ENCODE measurements at regions of chr1 and their contacts with region 1.

Region 1: DNA sequence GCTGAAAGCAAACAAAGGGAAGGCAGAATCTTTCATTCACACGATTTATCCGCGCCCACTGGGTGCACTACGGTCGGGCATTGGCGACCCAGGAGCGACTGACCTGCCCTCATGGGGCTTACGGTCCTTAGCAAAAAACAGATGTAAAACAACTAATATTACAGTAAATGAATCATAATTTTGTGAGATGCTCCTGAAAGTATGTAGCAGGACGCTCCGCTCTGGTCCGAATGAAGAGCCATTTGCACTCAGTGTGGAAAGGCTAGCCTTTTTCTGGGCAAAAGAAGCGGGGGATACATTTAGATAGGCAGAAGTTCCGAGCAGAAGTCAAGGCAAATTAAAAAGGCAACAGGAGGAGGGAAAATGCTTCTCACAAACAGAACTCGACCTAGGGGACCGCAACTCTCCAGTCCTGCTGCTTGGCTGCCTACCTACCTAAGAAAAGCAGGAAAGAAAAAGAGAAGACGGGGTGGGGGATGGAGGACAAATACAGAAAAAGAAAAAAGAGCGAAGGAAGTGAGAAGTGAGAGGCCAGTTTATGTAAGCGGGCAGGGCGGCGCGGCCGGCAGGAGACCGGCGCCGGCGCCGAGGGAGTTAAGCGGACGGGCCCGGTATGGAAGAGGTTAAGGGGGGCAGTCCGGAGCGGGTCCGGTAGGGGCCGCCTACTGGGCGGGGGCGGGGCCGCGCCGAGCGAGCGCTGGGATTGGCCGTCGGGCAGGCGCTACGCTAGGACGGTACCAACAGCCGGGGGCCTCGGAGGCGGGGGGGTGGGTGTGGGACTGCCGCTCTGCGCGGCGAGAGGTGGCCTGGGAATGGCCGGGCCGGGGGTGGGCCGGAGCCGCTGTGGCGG is at the start of gene FAM20B:
- DNase-seq: peak; percentile 85 to 90 (median 88)
- H3K4me3 ChIP-seq: peak within 1 kb of the TSS; percentile 61 to 77
- H3K4me3 Mint-ChIP-seq: peak within 1 kb of the TSS; percentile 88 to 94 (median 90)
- H3K27ac ChIP-seq: peak within 1 kb of the TSS; percentile 77
- H3K27ac Mint-ChIP-seq: peak within 1 kb of the TSS; percentile 85 to 95 (median 90)
- H3K4me1 ChIP-seq: peaks cover 37% of the 10 kb centered on the region
- H3K4me1 Mint-ChIP-seq: peaks cover 29 to 49% (median 39%) of the 10 kb centered on the region in 4 donors
- H3K27me3 ChIP-seq: no peaks in the 10 kb centered on the region
- H3K27me3 Mint-ChIP-seq: no peaks in the 10 kb centered on the region
- total RNA-seq, gene FAM20B: 29.6 to 31.9 TPM

Region 2: GRCh38 chr1:178520783-178521182 is 504.6 kb before region 1 on chr1:
- CTCF ChIA-PET with region 1: no interaction called
- POLR2A ChIA-PET with region 1: no interaction called
- intact Hi-C with region 1: no loop called
- DNase-seq: no peak
- H3K4me3 ChIP-seq: no peak overlapping the region
- H3K4me3 Mint-ChIP-seq: no peak overlapping the region
- H3K27ac ChIP-seq: no peak overlapping the region
- H3K27ac Mint-ChIP-seq: no peak overlapping the region
- H3K4me1 ChIP-seq: no peaks in the 10 kb centered on the region
- H3K4me1 Mint-ChIP-seq: no peaks in the 10 kb centered on the region
- H3K27me3 ChIP-seq: no peaks in the 10 kb centered on the region
- H3K27me3 Mint-ChIP-seq: no peaks in the 10 kb centered on the region

Region 3: GRCh38 chr1:178542560-178543356 is 482.6 kb before region 1 on chr1:
- CTCF ChIA-PET with region 1: no interaction called
- POLR2A ChIA-PET with region 1: no interaction called
- intact Hi-C with region 1: loop called (anchors 1 kb)
- DNase-seq: peak; percentile 73 to 88 (median 81)
- H3K4me3 ChIP-seq: peak overlapping the region; percentile 91 to 99
- H3K4me3 Mint-ChIP-seq: peak overlapping the region; percentile 92 to 95 (median 94)
- H3K27ac ChIP-seq: peak overlapping the region; percentile 39
- H3K27ac Mint-ChIP-seq: peak overlapping the region in 6 of 7 donors; percentile 65 to 90 (median 83)
- H3K4me1 ChIP-seq: peaks cover 16% of the 10 kb centered on the region
- H3K4me1 Mint-ChIP-seq: peaks cover 9 to 27% (median 11%) of the 10 kb centered on the region in 4 donors
- H3K27me3 ChIP-seq: no peaks in the 10 kb centered on the region
- H3K27me3 Mint-ChIP-seq: no peaks in the 10 kb centered on the region

Region 4: GRCh38 chr1:178806665-178807300 is 218.6 kb before region 1 on chr1:
- CTCF ChIA-PET with region 1: no interaction called
- POLR2A ChIA-PET with region 1: no interaction called
- intact Hi-C with region 1: no loop called
- DNase-seq: no peak
- H3K4me3 ChIP-seq: no peak overlapping the region
- H3K4me3 Mint-ChIP-seq: no peak overlapping the region
- H3K27ac ChIP-seq: no peak overlapping the region
- H3K27ac Mint-ChIP-seq: no peak overlapping the region
- H3K4me1 ChIP-seq: no peaks in the 10 kb centered on the region
- H3K4me1 Mint-ChIP-seq: no peaks in the 10 kb centered on the region
- H3K27me3 ChIP-seq: no peaks in the 10 kb centered on the region
- H3K27me3 Mint-ChIP-seq: no peaks in the 10 kb centered on the region

Region 5: GRCh38 chr1:179002552-179003345 is 22.6 kb before region 1 on chr1:
- CTCF ChIA-PET with region 1: interaction called, 36 read pairs
- POLR2A ChIA-PET with region 1: no interaction called
- intact Hi-C with region 1: no loop called
- DNase-seq: peak; percentile 39 to 59 (median 44)
- H3K4me3 ChIP-seq: no peak overlapping the region
- H3K4me3 Mint-ChIP-seq: peak overlapping the region in 6 of 8 donors; percentile 9 to 71 (median 24)
- H3K27ac ChIP-seq: no peak overlapping the region
- H3K27ac Mint-ChIP-seq: peak overlapping the region in 5 of 7 donors; percentile 15 to 86 (median 77)
- H3K4me1 ChIP-seq: peaks cover 19% of the 10 kb centered on the region
- H3K4me1 Mint-ChIP-seq: peaks cover 11 to 21% (median 16%) of the 10 kb centered on the region in 4 donors
- H3K27me3 ChIP-seq: no peaks in the 10 kb centered on the region
- H3K27me3 Mint-ChIP-seq: peaks cover 0 to 3% of the 10 kb centered on the region in 2 donors

Region 6: DNA sequence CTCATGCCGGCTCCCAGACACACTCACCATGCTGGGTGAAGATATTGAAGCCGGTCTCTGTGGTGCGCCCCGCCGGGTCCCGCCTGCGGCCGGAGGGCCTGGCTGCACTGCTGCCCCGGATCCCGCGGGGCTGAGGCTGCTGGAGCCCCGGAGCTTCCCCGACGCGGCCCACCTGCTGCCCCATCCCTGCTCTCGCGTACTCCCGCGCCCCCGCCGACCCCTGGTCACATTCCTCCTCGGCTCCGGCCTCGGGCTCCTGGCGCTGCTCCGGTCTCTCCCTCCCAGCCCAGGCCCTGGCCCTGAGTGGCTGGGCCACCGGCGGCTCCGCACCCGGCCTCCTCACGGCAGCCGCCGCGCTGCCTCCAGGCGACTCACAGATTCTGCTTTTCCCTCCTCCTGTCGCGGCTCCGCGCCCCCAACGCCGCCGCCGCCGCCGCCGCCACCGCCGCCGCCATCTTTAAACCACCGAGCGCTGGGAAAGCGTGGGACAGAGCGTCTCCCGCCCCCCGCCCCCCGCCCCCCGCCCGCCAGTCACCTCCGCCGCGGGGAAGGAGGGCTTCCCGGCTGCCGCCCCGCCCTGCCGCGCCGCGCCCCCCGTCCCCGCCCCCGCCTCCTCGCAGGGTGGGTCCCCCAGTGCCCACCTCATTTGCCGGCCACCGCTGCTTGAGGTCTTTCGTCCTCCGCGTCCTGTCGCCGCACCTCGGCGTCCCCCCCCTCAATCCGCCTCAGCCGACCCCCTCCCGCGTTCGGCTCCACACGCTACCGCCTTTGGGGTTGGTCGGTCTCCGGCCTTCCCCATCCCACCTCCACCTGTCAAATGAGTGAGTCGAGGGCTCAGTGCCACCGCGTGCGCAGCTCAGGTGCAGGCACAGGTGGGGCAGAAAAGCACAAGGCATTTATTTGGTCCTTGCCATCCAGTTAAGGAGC is 204.1 kb after region 1 on chr1 and contains the start of gene ABL2:
- CTCF ChIA-PET with region 1: no interaction called
- POLR2A ChIA-PET with region 1: no interaction called
- intact Hi-C with region 1: loop called (anchors 5 kb)
- DNase-seq: peak; percentile 37 to 58 (median 50)
- H3K4me3 ChIP-seq: peak within 1 kb of the TSS; percentile 14 to 73
- H3K4me3 Mint-ChIP-seq: peak within 1 kb of the TSS; percentile 92 to 98 (median 93)
- H3K27ac ChIP-seq: peak within 1 kb of the TSS; percentile 59
- H3K27ac Mint-ChIP-seq: peak within 1 kb of the TSS; percentile 91 to 95 (median 92)
- H3K4me1 ChIP-seq: peaks cover 23% of the 10 kb centered on the region
- H3K4me1 Mint-ChIP-seq: peaks cover 22 to 37% (median 29%) of the 10 kb centered on the region in 4 donors
- H3K27me3 ChIP-seq: no peaks in the 10 kb centered on the region
- H3K27me3 Mint-ChIP-seq: no peaks in the 10 kb centered on the region
- total RNA-seq, gene ABL2: 16.9 to 18.6 TPM

Region 7: GRCh38 chr1:179882243-179883039 is 857.1 kb after region 1 on chr1 and contains the start of gene TOR1AIP1:
- CTCF ChIA-PET with region 1: no interaction called
- POLR2A ChIA-PET with region 1: no interaction called
- intact Hi-C with region 1: loop called (anchors 2 kb)
- DNase-seq: peak; percentile 98 to 99 (median 98)
- H3K4me3 ChIP-seq: peak within 1 kb of the TSS; percentile 80 to 94
- H3K4me3 Mint-ChIP-seq: peak within 1 kb of the TSS; percentile 94 to 99 (median 96)
- H3K27ac ChIP-seq: peak within 1 kb of the TSS; percentile 99
- H3K27ac Mint-ChIP-seq: peak within 1 kb of the TSS; percentile 99 to 100 (median 100)
- H3K4me1 ChIP-seq: peaks cover 53% of the 10 kb centered on the region
- H3K4me1 Mint-ChIP-seq: peaks cover 31 to 77% (median 53%) of the 10 kb centered on the region in 4 donors
- H3K27me3 ChIP-seq: no peaks in the 10 kb centered on the region
- H3K27me3 Mint-ChIP-seq: no peaks in the 10 kb centered on the region
- total RNA-seq, gene TOR1AIP1: 53.8 to 61.0 TPM

Region 8: DNA sequence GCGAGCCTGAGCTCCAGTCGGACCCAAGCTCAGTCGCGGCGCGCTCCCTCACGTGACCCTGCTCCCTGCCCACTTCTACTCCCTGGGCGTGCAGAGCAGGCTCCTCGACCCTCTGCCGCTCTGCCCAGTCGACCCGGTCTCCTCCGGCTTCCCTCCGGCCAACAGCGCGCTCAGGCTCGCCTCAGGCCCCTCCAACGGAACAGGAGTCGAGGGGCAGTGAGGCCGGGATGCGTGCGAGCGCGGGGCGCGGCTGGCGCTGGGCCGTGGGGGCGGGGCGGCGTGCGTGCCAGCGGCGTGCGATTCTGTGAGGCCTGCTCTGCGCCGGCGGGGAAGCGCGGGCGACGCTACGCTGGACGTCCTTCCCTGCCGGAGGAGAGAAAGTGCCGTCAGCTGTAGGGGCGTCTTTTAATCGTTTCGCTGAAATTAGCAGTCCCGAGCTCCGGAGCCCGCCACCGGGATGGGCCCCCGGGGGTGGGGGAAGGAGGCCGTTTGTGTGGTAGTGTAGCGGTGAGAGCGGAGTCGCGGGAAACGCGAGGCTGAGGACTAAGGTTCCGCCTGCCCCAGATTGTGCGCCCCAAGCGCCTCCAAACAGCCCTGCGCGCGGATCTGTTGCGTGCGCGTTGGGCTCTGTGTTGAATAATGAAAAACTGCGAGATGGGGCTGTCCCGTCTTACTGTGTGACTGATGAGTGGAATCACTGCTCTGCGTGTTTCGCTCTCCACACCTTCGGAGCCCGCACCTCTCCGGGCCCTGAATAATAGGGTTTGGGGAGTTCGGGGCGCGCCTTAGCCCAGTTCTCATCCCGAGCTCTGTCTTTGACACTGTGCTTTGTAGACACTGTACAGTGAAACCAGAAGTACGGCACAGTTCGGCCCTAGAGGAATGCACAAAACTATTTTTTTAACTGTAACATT is 1477.3 kb after region 1 on chr1 and contains the start of gene ACBD6:
- CTCF ChIA-PET with region 1: no interaction called
- POLR2A ChIA-PET with region 1: no interaction called
- intact Hi-C with region 1: loop called (anchors 10 kb)
- DNase-seq: peak; percentile 86 to 91 (median 88)
- H3K4me3 ChIP-seq: peak within 1 kb of the TSS; percentile 89 to 95
- H3K4me3 Mint-ChIP-seq: peak within 1 kb of the TSS; percentile 96 to 99 (median 98)
- H3K27ac ChIP-seq: peak within 1 kb of the TSS; percentile 71
- H3K27ac Mint-ChIP-seq: peak within 1 kb of the TSS; percentile 92 to 99 (median 97)
- H3K4me1 ChIP-seq: peaks cover 42% of the 10 kb centered on the region
- H3K4me1 Mint-ChIP-seq: peaks cover 23 to 42% (median 31%) of the 10 kb centered on the region in 4 donors
- H3K27me3 ChIP-seq: no peaks in the 10 kb centered on the region
- H3K27me3 Mint-ChIP-seq: no peaks in the 10 kb centered on the region
- total RNA-seq, gene ACBD6: 55.1 to 64.2 TPM